ENCODE measurements at regions of chr2 and their contacts with region 1.

Region 1: GRCh38 chr2:120520929-120521912 is 175.3 kb downstream of the INHBB start:
- DNase-seq: no peak
- H3K4me3 ChIP-seq: no peak overlapping the region
- CTCF ChIP-seq: peak; percentile 87

Region 2: GRCh38 chr2:120531863-120532600 is 10.8 kb after region 1 on chr2:
- CTCF ChIA-PET with region 1: interaction called, 22 read pairs
- POLR2A ChIA-PET with region 1: no interaction called
- DNase-seq: no peak
- H3K4me3 ChIP-seq: no peak overlapping the region
- CTCF ChIP-seq: no peak

Region 3: DNA sequence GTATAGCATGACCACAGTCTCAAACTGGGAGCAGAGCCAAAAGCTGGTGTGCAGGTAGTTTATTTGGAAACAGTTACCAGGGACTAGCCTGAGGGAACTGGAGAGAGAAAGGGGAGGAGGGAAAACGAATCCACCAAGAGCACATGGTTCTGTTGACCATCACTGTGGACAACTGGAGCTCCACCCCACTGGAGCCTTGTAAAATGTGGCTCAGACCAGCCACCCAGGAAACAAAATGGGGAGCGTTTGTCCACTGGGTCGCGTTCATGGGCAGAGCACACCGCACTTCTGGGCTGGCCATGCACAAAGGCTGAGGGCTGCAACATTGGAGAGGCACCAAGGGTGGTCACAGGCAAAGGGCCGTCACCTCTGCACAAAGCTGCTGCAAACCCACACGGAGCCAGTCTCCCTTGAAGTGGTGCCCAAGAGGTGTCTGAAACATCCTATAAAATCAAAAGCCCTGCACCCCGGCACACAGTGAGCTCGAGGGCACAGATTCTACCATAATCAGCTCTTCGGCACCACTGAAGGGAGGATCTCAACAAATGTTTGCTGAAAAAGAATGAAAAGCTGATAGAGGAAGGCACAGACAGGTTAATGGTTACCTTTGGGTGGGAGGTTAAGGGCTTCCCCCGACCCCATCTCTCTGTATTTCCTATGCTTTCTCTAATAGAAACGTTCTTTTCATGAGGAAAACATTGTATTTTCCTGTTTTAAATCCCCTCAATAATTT is 17.6 kb after region 1 on chr2:
- CTCF ChIA-PET with region 1: interaction called, 22 read pairs
- POLR2A ChIA-PET with region 1: no interaction called
- DNase-seq: no peak
- H3K4me3 ChIP-seq: no peak overlapping the region
- CTCF ChIP-seq: no peak